ENCODE measurements at regions of chr19 and their contacts with region 1.

Region 1: GRCh38 chr19:17766543-17767131 is 15.4 kb downstream of the FCHO1 start:
- DNase-seq: no peak
- ATAC-seq: peak; percentile 96
- H3K4me3 ChIP-seq: peak overlapping the region; percentile 25 to 34
- H3K27ac ChIP-seq: no peak overlapping the region
- H3K4me1 ChIP-seq: peaks cover 3% of the 10 kb centered on the region; the same call in 1 of the 2 replicates
- H3K27me3 ChIP-seq: no peaks in the 10 kb centered on the region
- CTCF ChIP-seq: peak; percentile 95

Region 2: GRCh38 chr19:17530586-17530985 is 236.1 kb before region 1 on chr19:
- CTCF ChIA-PET with region 1: interaction called, 10 read pairs
- POLR2A ChIA-PET with region 1: no interaction called
- in situ Hi-C with region 1: no loop called
- intact Hi-C with region 1: no loop called
- DNase-seq: no peak
- ATAC-seq: peak; percentile 80
- H3K4me3 ChIP-seq: no peak overlapping the region
- H3K27ac ChIP-seq: peak overlapping the region; percentile 65; the same call in 1 of the 2 replicates
- H3K4me1 ChIP-seq: no peaks in the 10 kb centered on the region; the same call in 1 of the 2 replicates
- H3K27me3 ChIP-seq: no peaks in the 10 kb centered on the region
- CTCF ChIP-seq: no peak

Region 3: GRCh38 chr19:17681505-17682125 is 85.0 kb before region 1 on chr19:
- CTCF ChIA-PET with region 1: interaction called, 10 read pairs
- POLR2A ChIA-PET with region 1: no interaction called
- in situ Hi-C with region 1: no loop called
- intact Hi-C with region 1: no loop called
- DNase-seq: no peak
- ATAC-seq: no peak
- H3K4me3 ChIP-seq: no peak overlapping the region
- H3K27ac ChIP-seq: no peak overlapping the region
- H3K4me1 ChIP-seq: no peaks in the 10 kb centered on the region
- H3K27me3 ChIP-seq: 0 out of 2 replicates have a peak, but pooled peaks cover 2% of the 10 kb centered on the region
- CTCF ChIP-seq: no peak

Region 4: GRCh38 chr19:17859533-17860330 is 93.1 kb after region 1 on chr19 and contains the start of gene RPL18A:
- CTCF ChIA-PET with region 1: no interaction called
- POLR2A ChIA-PET with region 1: no interaction called
- in situ Hi-C with region 1: no loop called
- intact Hi-C with region 1: no loop called
- DNase-seq: peak; percentile 97
- ATAC-seq: peak; percentile 93
- H3K4me3 ChIP-seq: peak within 1 kb of the TSS; percentile 96 to 99
- H3K27ac ChIP-seq: peak within 1 kb of the TSS; percentile 98
- H3K4me1 ChIP-seq: peaks cover 25% of the 10 kb centered on the region
- H3K27me3 ChIP-seq: no peaks in the 10 kb centered on the region
- CTCF ChIP-seq: peak; percentile 94
- total RNA-seq, gene RPL18A: 1,352 TPM